ENCODE measurements at regions of chr2 and their contacts with region 1.

Region 1: GRCh38 chr2:216034065-216034464 is 20.7 kb upstream of the MREG start:
- DNase-seq: peak; percentile 77
- H3K4me3 ChIP-seq: no peak overlapping the region
- H3K27ac ChIP-seq: no peak overlapping the region
- H3K4me1 ChIP-seq: no peaks in the 10 kb centered on the region
- H3K27me3 ChIP-seq: no peaks in the 10 kb centered on the region
- CTCF ChIP-seq: peak; percentile 84 to 86
- POLR2A ChIP-seq: no peak

Region 2: DNA sequence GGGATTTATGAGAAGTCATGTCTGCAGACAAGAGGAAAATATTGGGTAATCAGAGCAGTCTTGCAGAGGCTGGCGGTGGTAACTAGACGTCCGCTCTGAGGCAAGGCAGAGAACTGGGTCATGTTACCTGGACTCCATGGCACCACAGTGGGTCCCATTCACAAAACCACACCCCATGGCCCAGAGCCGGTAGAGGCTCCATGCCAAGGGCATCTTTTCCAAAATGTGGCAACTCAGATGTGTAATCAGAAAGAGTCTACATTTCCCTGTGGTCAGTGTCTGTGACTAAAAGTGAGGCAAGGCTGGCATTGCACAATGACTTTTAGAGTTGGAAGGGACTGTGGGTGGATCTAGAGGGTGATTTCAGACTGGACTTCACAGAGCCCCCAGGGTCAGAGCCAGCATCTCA is 133.9 kb before region 1 on chr2:
- CTCF ChIA-PET with region 1: no interaction called
- POLR2A ChIA-PET with region 1: no interaction called
- dilution Hi-C with region 1: no loop called
- intact Hi-C with region 1: no loop called
- DNase-seq: no peak
- H3K4me3 ChIP-seq: no peak overlapping the region
- H3K27ac ChIP-seq: no peak overlapping the region
- H3K4me1 ChIP-seq: no peaks in the 10 kb centered on the region
- H3K27me3 ChIP-seq: no peaks in the 10 kb centered on the region
- CTCF ChIP-seq: no peak
- POLR2A ChIP-seq: no peak

Region 3: GRCh38 chr2:216044883-216045486 is 10.9 kb after region 1 on chr2:
- CTCF ChIA-PET with region 1: interaction called, 19 read pairs
- POLR2A ChIA-PET with region 1: no interaction called
- dilution Hi-C with region 1: no loop called
- intact Hi-C with region 1: no loop called
- DNase-seq: no peak
- H3K4me3 ChIP-seq: no peak overlapping the region
- H3K27ac ChIP-seq: no peak overlapping the region
- H3K4me1 ChIP-seq: no peaks in the 10 kb centered on the region
- H3K27me3 ChIP-seq: no peaks in the 10 kb centered on the region
- CTCF ChIP-seq: no peak
- POLR2A ChIP-seq: no peak

Region 4: DNA sequence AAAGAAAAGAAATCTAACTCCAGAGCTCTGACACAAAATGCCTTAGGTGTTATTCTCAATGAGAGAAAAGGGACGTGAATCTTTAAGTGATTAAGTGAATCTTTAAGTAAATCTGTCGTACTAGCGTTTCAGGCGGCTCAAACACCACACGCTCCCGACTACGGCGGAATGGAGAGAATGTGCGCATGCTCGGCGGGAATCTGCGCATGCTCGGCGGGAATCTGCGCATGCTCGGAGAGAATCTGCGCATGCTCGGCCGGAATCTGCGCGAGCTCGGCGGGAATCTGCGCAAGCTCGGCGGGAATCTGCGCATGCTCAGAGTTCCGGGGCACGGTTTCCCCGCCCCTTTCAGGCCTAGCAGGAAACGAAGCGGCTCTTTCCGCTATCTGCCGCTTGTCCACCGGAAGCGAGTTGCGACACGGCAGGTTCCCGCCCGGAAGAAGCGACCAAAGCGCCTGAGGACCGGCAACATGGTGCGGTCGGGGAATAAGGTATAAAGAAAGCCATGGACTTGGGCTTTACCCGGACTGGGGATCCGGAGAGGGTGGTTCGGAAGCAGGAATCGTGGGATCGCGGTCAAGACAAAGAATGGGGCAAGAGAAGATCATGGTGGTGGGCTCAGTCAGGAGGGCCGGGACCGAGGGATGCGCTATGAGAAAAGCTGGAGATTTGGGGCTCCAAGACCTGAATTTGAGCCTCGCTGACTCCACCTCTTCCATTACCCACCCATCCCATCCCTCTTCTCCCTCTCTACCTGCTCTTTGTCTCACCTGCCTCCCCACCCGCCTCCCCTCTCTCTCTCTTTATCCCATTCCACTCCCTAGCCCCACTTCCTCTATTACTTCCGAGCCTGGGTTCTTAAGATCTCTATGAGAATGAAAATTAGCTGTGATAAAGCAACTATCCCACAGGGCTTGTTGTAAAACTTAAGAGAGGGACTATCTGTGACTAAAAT is 75.2 kb after region 1 on chr2 and contains the start of gene XRCC5:
- CTCF ChIA-PET with region 1: interaction called, 8 read pairs
- POLR2A ChIA-PET with region 1: no interaction called
- dilution Hi-C with region 1: no loop called
- intact Hi-C with region 1: loop called (anchors 1 kb)
- DNase-seq: peak; percentile 99
- H3K4me3 ChIP-seq: peak within 1 kb of the TSS; percentile 85 to 100 (median 99)
- H3K27ac ChIP-seq: peak within 1 kb of the TSS; percentile 96
- H3K4me1 ChIP-seq: peaks cover 19% of the 10 kb centered on the region
- H3K27me3 ChIP-seq: peaks cover 4 to 5% of the 10 kb centered on the region in 2 experiments
- CTCF ChIP-seq: no peak
- POLR2A ChIP-seq: peak; percentile 77
- total RNA-seq, gene XRCC5: 313 and 319 TPM in 2 replicates

Region 5: GRCh38 chr2:216259081-216259480 is 225.0 kb after region 1 on chr2:
- CTCF ChIA-PET with region 1: no interaction called
- POLR2A ChIA-PET with region 1: no interaction called
- dilution Hi-C with region 1: no loop called
- intact Hi-C with region 1: no loop called
- DNase-seq: no peak
- H3K4me3 ChIP-seq: no peak overlapping the region
- H3K27ac ChIP-seq: no peak overlapping the region
- H3K4me1 ChIP-seq: no peaks in the 10 kb centered on the region
- H3K27me3 ChIP-seq: no peaks in the 10 kb centered on the region
- CTCF ChIP-seq: no peak
- POLR2A ChIP-seq: no peak